ENCODE measurements at regions of chr6 and their contacts with region 1.

Region 1: DNA sequence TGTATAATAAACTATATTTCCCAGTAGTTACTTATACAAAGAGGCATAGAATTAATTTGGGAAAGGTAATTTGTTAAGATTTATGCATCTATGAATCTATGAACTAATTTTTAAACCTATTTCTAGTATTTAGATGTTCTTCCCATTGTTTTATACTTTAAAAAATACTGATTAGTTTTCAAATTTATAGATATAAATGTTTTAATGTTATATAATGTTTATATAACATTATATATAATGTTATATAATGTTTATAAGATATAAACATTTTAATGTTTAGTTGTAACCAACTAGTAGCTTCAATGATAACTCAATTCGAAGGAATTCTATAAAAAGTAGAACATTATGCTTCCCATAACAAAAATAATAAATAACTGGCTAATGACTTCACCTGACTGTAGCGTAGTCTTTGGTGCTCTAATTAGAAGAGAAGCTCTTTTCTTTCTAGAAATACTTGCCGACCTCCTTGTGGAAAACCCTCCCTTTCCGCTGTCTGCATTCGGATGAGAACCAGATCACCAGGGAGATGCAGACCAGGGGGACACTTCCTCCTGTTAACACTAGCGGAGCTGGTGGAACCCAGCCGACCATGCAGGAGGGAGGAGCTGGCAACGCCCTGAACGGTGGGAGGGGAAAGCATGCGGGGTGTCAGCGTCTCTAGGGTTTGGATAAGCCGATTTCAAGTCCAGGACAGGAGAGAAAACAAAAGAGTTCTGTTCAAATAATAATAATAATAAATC is 158.4 kb downstream of the OR2B2 start:
- DNase-seq: peak; percentile 89
- ATAC-seq: peak; percentile 70
- H3K4me3 Mint-ChIP-seq: peak overlapping the region; percentile 98
- H3K27ac Mint-ChIP-seq: peak overlapping the region; percentile 81
- H3K4me1 Mint-ChIP-seq: peaks cover 31% of the 10 kb centered on the region
- H3K27me3 Mint-ChIP-seq: peaks cover 3% of the 10 kb centered on the region

Region 2: GRCh38 chr6:26312501-26313390 is 1441.1 kb before region 1 on chr6:
- CTCF ChIA-PET with region 1: no interaction called
- POLR2A ChIA-PET with region 1: no interaction called
- intact Hi-C with region 1: loop called in 1 of 2 experiments (anchors 1 kb)
- DNase-seq: peak; percentile 89
- ATAC-seq: peak; percentile 69
- H3K4me3 Mint-ChIP-seq: peak overlapping the region; percentile 88
- H3K27ac Mint-ChIP-seq: peak overlapping the region; percentile 90
- H3K4me1 Mint-ChIP-seq: peaks cover 37% of the 10 kb centered on the region
- H3K27me3 Mint-ChIP-seq: peaks cover 3% of the 10 kb centered on the region

Region 3: GRCh38 chr6:27188885-27189418 is 564.9 kb before region 1 on chr6:
- CTCF ChIA-PET with region 1: interaction called, 3 read pairs
- POLR2A ChIA-PET with region 1: no interaction called
- intact Hi-C with region 1: loop called (anchors 1 to 5 kb)
- DNase-seq: peak; percentile 75
- ATAC-seq: peak; percentile 89
- H3K4me3 Mint-ChIP-seq: peak overlapping the region; percentile 81
- H3K27ac Mint-ChIP-seq: peak overlapping the region; percentile 76
- H3K4me1 Mint-ChIP-seq: peaks cover 10% of the 10 kb centered on the region
- H3K27me3 Mint-ChIP-seq: peaks cover 2% of the 10 kb centered on the region

Region 4: DNA sequence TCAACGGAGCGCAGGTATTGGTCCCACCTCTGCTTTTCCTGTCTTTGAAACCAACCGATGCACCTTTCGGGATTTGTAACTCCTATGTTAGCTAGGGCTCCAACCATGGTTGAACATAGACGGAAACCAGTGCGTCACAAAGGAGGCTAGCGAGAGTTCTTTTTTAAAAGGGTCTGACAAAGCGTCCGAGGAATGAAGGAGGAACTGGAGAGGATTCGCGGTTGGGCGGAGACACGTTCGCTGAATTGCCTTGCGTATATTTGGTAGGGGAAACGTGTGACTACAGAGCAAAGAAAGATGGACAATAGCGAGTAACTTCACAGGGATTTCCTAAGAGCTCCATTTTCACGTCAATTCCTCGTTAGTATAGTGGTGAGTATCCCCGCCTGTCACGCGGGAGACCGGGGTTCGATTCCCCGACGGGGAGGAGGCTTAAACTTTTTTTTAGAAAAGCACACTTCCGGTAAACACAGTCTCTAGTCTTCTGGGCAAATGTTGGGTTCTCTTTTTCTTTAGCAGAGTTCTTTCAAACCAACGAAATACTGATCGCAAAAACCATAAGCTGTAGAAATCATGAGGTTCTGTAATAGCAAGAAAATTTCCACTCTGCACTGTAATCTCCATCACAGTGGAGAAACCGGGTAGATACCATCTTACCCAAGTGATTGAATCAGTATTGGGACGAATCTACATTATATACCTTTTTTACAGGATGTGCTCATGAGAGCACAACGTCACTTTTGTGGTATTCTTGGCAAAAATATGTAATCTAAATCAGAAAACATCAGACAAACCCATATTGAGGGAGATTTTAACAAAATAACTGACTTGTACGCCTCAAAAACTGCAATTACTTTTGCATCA is 274.3 kb before region 1 on chr6:
- CTCF ChIA-PET with region 1: interaction called, 3 read pairs
- POLR2A ChIA-PET with region 1: no interaction called
- intact Hi-C with region 1: loop called (anchors 1 to 2 kb)
- DNase-seq: peak; percentile 89
- ATAC-seq: peak; percentile 69
- H3K4me3 Mint-ChIP-seq: no peak overlapping the region
- H3K27ac Mint-ChIP-seq: no peak overlapping the region
- H3K4me1 Mint-ChIP-seq: peaks cover 6% of the 10 kb centered on the region
- H3K27me3 Mint-ChIP-seq: no peaks in the 10 kb centered on the region

Region 5: GRCh38 chr6:27608916-27609883 is 144.6 kb before region 1 on chr6:
- CTCF ChIA-PET with region 1: interaction called, 4 read pairs
- POLR2A ChIA-PET with region 1: no interaction called
- intact Hi-C with region 1: loop called in 1 of 2 experiments (anchors 5 kb)
- DNase-seq: no peak
- ATAC-seq: no peak
- H3K4me3 Mint-ChIP-seq: no peak overlapping the region
- H3K27ac Mint-ChIP-seq: no peak overlapping the region
- H3K4me1 Mint-ChIP-seq: peaks cover 13% of the 10 kb centered on the region
- H3K27me3 Mint-ChIP-seq: peaks cover 46% of the 10 kb centered on the region

Region 6: DNA sequence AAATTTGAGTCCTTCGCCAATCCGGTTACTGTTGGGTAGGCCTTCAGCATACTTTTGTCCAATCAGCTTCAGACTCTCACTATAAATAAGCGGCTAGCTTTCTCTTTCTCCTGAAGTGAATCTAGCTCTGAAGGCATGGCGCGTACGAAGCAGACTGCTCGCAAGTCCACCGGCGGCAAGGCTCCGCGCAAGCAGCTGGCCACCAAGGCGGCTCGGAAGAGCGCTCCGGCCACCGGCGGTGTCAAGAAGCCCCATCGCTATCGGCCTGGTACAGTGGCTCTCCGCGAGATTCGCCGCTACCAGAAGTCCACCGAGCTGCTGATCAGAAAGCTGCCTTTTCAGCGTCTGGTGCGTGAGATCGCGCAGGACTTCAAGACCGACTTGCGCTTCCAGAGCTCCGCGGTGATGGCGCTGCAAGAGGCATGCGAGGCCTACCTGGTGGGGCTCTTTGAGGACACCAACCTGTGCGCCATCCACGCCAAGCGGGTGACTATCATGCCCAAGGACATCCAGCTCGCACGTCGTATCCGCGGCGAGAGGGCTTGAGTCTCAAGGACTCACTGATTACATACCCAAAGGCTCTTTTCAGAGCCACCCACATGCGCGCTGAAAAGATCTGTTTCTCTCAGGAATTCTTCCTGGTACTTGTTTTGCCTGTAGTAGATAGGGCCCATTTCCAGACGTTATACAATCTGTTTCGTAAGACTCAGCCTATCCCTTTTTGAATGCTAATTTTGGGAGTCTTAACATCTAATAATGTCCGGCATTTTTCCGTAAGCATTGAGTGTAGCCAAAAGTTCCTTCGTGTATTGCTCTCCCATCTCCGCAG is 56.3 kb after region 1 on chr6:
- CTCF ChIA-PET with region 1: interaction called, 4 read pairs
- POLR2A ChIA-PET with region 1: interaction called, 3 read pairs
- intact Hi-C with region 1: loop called in 1 of 2 experiments (anchors 1 kb)
- DNase-seq: peak; percentile 83
- ATAC-seq: peak; percentile 33
- H3K4me3 Mint-ChIP-seq: peak overlapping the region; percentile 86
- H3K27ac Mint-ChIP-seq: peak overlapping the region; percentile 95
- H3K4me1 Mint-ChIP-seq: peaks cover 49% of the 10 kb centered on the region
- H3K27me3 Mint-ChIP-seq: no peaks in the 10 kb centered on the region